A549 (cell line): ENCODE measurements at regions of chr7 and their contacts with region 1.

Region 1: DNA sequence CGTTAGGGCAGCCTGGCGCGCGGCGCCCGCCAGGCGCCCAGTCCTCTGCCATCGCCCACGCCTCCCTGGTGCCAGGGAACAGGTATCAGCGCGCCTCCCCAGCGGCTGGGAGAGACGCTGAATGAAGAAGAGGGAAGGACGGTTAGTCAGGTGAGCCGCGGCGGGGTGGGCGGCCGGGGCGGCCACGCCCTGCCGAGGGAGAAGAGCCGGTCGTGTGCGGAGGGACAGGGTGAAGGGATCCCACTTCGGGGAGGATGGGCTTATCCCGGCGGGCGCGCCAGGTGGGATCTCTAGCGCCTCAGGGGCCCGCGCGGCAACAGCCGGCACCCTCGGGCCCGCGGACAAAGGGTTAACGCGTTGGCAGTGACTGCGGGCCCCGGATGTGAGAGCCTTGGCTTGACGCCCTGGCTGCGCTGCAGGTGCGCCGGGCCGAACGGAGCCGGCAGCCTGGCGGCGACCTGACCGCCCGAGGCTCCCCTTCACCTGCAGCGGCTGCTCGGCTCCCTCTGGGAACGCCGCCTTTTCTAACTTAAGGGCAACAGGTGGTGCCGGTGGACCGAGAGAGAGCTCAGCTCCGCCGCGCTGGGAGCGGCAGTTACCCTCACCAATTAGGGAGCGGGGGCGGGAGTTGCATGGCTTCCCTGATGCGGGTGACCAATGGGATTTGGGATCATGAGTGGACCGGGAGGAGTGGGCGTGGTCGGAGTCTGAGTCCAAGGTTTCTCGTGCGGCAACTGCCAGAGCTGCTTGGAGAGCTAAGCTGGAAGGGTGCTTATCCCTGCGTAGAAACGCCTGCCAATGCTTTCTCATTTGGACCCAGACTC is at the start of gene ARL4A:
- DNase-seq: peak; percentile 98
- ATAC-seq: peak; percentile 84 to 90
- H3K4me3 ChIP-seq: peak within 1 kb of the TSS; percentile 92
- H3K27ac ChIP-seq: peak within 1 kb of the TSS; percentile 98 to 99
- H3K4me1 ChIP-seq: peaks cover 42% of the 10 kb centered on the region; the same call in 2 of the 3 replicates
- CTCF ChIP-seq: peak; percentile 46
- EP300 ChIP-seq: no peak
- POLR2A ChIP-seq: peak; percentile 87
- RAD21 ChIP-seq: peak; percentile 79 to 94
- polyA plus RNA-seq, gene ARL4A: 58.9 and 76.1 TPM in 2 replicates

Region 2: GRCh38 chr7:11786186-11786585 is 900.9 kb before region 1 on chr7:
- CTCF ChIA-PET with region 1: no interaction called
- POLR2A ChIA-PET with region 1: no interaction called
- DNase-seq: peak; percentile 18 to 90
- ATAC-seq: peak; percentile 64 to 81
- H3K4me3 ChIP-seq: peak overlapping the region; percentile 6; the same call in 1 of the 3 replicates
- H3K27ac ChIP-seq: peak overlapping the region; percentile 80 to 84
- H3K4me1 ChIP-seq: peaks cover 66% of the 10 kb centered on the region
- CTCF ChIP-seq: no peak
- EP300 ChIP-seq: peak; percentile 60 to 85; a peak in 3 of 5 replicates
- POLR2A ChIP-seq: no peak
- RAD21 ChIP-seq: peak; percentile 30 to 31; a peak in 3 of 5 replicates

Region 3: DNA sequence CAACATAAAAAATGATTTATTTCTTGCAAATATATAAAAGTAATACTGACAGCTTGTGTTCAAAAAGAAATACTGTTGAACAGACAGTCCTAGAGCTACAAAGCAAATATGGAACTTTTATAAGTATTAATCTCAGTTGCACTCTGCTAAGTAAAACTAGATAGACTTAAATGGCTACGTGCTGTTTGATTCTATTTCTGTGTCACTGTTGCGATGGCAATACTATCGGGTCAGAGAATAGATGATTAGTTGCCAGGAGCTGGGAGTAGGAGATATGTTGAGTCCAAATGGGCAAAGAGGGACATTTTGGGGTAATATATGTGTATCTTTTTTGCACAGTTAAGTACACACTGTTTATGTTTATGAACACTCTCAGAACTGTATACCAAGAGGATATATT is 242.3 kb before region 1 on chr7:
- CTCF ChIA-PET with region 1: no interaction called
- POLR2A ChIA-PET with region 1: no interaction called
- DNase-seq: no peak
- ATAC-seq: no peak
- H3K4me3 ChIP-seq: no peak overlapping the region
- H3K27ac ChIP-seq: no peak overlapping the region
- H3K4me1 ChIP-seq: no peaks in the 10 kb centered on the region
- CTCF ChIP-seq: no peak
- EP300 ChIP-seq: no peak
- POLR2A ChIP-seq: no peak
- RAD21 ChIP-seq: no peak

Region 4: GRCh38 chr7:12570534-12571461 is 116.3 kb before region 1 on chr7 and contains the start of gene SCIN:
- CTCF ChIA-PET with region 1: no interaction called
- POLR2A ChIA-PET with region 1: no interaction called
- DNase-seq: peak; percentile 34 to 46
- ATAC-seq: peak; percentile 89
- H3K4me3 ChIP-seq: peak within 1 kb of the TSS; percentile 55
- H3K27ac ChIP-seq: peak within 1 kb of the TSS in 1 of 2 experiments; percentile 38; a peak in 3 of 6 replicates
- H3K4me1 ChIP-seq: peaks cover 5% of the 10 kb centered on the region; the same call in 1 of the 3 replicates
- CTCF ChIP-seq: no peak
- EP300 ChIP-seq: no peak
- POLR2A ChIP-seq: no peak
- RAD21 ChIP-seq: no peak
- polyA plus RNA-seq, gene SCIN: 0.27 and 0.33 TPM in 2 replicates

Region 5: GRCh38 chr7:12653519-12653917 is 33.6 kb before region 1 on chr7:
- CTCF ChIA-PET with region 1: interaction called, 20 read pairs
- POLR2A ChIA-PET with region 1: interaction called, 6 read pairs
- DNase-seq: no peak
- ATAC-seq: no peak
- H3K4me3 ChIP-seq: no peak overlapping the region
- H3K27ac ChIP-seq: no peak overlapping the region
- H3K4me1 ChIP-seq: peaks cover 36% of the 10 kb centered on the region
- CTCF ChIP-seq: no peak
- EP300 ChIP-seq: no peak
- POLR2A ChIP-seq: no peak
- RAD21 ChIP-seq: no peak

Region 6: GRCh38 chr7:12827920-12828319 is 140.8 kb after region 1 on chr7:
- CTCF ChIA-PET with region 1: interaction called, 11 read pairs
- POLR2A ChIA-PET with region 1: no interaction called
- DNase-seq: no peak
- ATAC-seq: no peak
- H3K4me3 ChIP-seq: no peak overlapping the region
- H3K27ac ChIP-seq: no peak overlapping the region
- H3K4me1 ChIP-seq: peaks cover 11% of the 10 kb centered on the region; the same call in 1 of the 3 replicates
- CTCF ChIP-seq: no peak
- EP300 ChIP-seq: no peak
- POLR2A ChIP-seq: no peak
- RAD21 ChIP-seq: no peak

Region 7: GRCh38 chr7:13017333-13017853 is 330.3 kb after region 1 on chr7:
- CTCF ChIA-PET with region 1: interaction called, 11 read pairs
- POLR2A ChIA-PET with region 1: interaction called, 18 read pairs
- DNase-seq: peak; percentile 65 to 82
- ATAC-seq: peak; percentile 96 to 97
- H3K4me3 ChIP-seq: peak overlapping the region; percentile 24
- H3K27ac ChIP-seq: peak overlapping the region; percentile 84 to 90
- H3K4me1 ChIP-seq: peaks cover 26% of the 10 kb centered on the region
- CTCF ChIP-seq: no peak
- EP300 ChIP-seq: peak in 1 of 2 experiments; percentile 67; a peak in 2 of 5 replicates
- POLR2A ChIP-seq: no peak
- RAD21 ChIP-seq: peak in 1 of 2 experiments; percentile 14; a peak in 1 of 5 replicates

Region 8: GRCh38 chr7:13117103-13117502 is 430.0 kb after region 1 on chr7:
- CTCF ChIA-PET with region 1: interaction called, 80 read pairs
- POLR2A ChIA-PET with region 1: interaction called, 15 read pairs
- DNase-seq: peak; percentile 15 to 29
- ATAC-seq: peak in 1 of 2 experiments; percentile 61; a peak in 1 of 6 replicates
- H3K4me3 ChIP-seq: no peak overlapping the region
- H3K27ac ChIP-seq: no peak overlapping the region; a peak in 1 of 6 replicates
- H3K4me1 ChIP-seq: peaks cover 20% of the 10 kb centered on the region; the same call in 2 of the 3 replicates
- CTCF ChIP-seq: peak; percentile 71
- EP300 ChIP-seq: no peak
- POLR2A ChIP-seq: no peak
- RAD21 ChIP-seq: peak; percentile 84 to 86

Region 9: DNA sequence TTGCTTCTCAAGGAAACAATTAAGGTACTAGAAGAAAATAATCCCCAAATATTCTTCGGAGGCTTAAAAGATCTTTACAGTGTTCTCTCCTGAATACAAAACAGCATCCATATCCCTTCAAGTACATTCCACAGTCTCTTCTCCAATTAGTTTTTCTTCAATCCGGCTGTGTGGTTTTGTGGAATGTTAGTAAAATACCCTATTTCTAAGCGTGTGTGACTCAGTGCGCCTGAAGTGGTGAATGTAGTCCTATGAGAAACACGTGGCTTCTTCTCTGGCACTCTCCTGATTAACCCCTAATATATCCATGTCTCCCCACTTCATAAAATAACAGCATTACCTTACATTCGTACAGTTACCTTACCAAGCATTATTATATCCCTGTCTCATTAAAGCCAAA is 570.6 kb after region 1 on chr7:
- CTCF ChIA-PET with region 1: interaction called, 122 read pairs
- POLR2A ChIA-PET with region 1: interaction called, 12 read pairs
- DNase-seq: no peak
- ATAC-seq: no peak
- H3K4me3 ChIP-seq: no peak overlapping the region
- H3K27ac ChIP-seq: no peak overlapping the region
- H3K4me1 ChIP-seq: no peaks in the 10 kb centered on the region
- CTCF ChIP-seq: no peak
- EP300 ChIP-seq: no peak
- POLR2A ChIP-seq: no peak
- RAD21 ChIP-seq: no peak